CD8-positive, alpha-beta memory T cell (primary cell): ENCODE measurements at regions of chr15 and their contacts with region 1.

Region 1: GRCh38 chr15:64893481-64894394 is 18.0 kb upstream of the ANKDD1A start:
- DNase-seq: peak; percentile 84 to 98 (median 92)
- H3K4me3 ChIP-seq: peak overlapping the region; percentile 75
- H3K4me3 Mint-ChIP-seq: peak overlapping the region; percentile 78 to 94 (median 87)
- H3K27ac ChIP-seq: peak overlapping the region; percentile 86
- H3K27ac Mint-ChIP-seq: peak overlapping the region; percentile 95 to 99 (median 98)
- H3K4me1 ChIP-seq: peaks cover 62% of the 10 kb centered on the region
- H3K4me1 Mint-ChIP-seq: peaks cover 66 to 76% (median 71%) of the 10 kb centered on the region in 3 donors
- H3K27me3 ChIP-seq: no peaks in the 10 kb centered on the region
- H3K27me3 Mint-ChIP-seq: no peaks in the 10 kb centered on the region

Region 2: DNA sequence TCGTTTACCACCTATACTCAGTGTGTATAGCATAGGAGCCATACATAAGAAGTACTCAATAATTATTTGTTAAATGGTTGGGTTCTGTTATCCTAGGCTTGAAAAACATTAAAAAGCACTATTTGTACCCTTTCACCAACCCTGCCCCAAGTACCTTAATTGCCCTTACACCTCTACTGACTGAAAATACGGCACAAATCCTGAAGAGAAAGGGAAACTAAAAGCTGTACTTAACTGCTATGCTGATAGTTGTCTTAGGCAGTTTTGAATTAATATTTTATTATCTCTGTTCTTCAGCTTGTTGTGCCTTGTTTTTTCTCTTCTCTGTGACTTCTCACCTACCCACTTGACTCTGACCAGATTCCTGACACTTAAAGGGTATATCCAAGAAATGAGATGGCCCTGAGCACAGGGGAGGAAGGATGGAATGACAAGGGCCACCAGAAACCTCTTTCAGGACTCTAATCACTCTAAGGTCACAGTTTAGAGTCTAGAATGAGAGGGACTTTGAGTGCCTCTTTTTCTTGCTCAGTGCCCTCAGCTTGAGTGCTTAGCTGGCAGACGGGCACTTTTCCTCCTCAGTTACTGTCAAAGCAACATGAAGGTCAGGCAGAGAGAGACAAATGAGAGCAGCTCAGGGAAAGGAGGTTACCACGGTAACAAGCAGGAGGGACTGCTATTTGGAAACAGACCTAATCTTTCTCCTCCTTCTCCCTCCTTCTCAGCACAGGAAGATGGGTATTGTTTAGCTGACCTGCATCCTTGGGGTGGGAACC is 296.8 kb before region 1 on chr15:
- CTCF ChIA-PET with region 1: no interaction called
- POLR2A ChIA-PET with region 1: no interaction called
- DNase-seq: peak in 3 of 5 donors; percentile 24 to 63 (median 53)
- H3K4me3 ChIP-seq: peak overlapping the region; percentile 21
- H3K4me3 Mint-ChIP-seq: peak overlapping the region; percentile 43 to 90 (median 82)
- H3K27ac ChIP-seq: peak overlapping the region; percentile 49
- H3K27ac Mint-ChIP-seq: peak overlapping the region; percentile 82 to 97 (median 93)
- H3K4me1 ChIP-seq: peaks cover 52% of the 10 kb centered on the region
- H3K4me1 Mint-ChIP-seq: peaks cover 48 to 80% (median 59%) of the 10 kb centered on the region in 3 donors
- H3K27me3 ChIP-seq: no peaks in the 10 kb centered on the region
- H3K27me3 Mint-ChIP-seq: no peaks in the 10 kb centered on the region

Region 3: DNA sequence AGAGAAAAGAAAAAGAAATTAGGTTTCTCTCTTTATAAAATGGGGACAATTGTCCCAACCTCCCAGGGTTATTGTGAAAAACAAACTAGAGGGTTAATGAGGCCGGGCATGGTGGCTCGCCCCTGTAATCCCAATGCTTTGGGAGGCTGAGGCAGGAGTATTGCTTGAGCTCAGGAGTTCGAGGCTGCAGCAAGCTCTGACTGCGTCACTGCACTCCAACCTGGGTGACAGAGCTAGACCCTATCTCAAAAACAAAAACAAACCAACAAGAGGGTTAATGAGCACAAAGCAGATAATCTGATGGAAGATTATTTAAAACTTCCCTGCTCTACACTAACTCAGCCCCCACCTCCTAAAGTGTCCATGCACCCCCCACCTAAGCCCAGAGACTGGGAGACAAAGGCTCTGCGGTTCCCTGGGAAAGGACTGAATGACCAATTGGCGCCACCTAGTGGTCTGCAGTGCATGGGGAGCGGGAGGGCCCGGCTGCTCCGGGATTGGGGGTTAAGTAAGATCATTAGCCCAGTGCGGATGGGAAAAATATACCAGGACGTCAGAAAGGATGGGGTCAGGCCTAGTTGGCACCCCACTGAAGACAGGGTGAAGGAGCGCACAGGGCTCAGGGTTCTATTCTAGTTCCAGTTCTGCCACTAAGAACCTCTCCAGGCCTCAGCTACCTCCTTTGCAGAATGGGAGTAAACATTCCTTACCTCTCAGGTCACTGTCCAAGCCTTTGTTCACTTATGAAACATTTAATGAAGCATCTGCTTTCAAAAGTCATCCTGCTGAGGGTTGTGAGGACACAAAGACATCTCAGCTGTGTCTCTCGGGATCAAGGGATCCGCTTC is 83.9 kb before region 1 on chr15:
- CTCF ChIA-PET with region 1: interaction called, 15 read pairs
- POLR2A ChIA-PET with region 1: interaction called, 3 read pairs
- DNase-seq: peak; percentile 42 to 76 (median 56)
- H3K4me3 ChIP-seq: no peak overlapping the region
- H3K4me3 Mint-ChIP-seq: no peak overlapping the region
- H3K27ac ChIP-seq: no peak overlapping the region
- H3K27ac Mint-ChIP-seq: no peak overlapping the region
- H3K4me1 ChIP-seq: no peaks in the 10 kb centered on the region
- H3K4me1 Mint-ChIP-seq: peaks cover 3 to 6% (median 5%) of the 10 kb centered on the region in 3 donors
- H3K27me3 ChIP-seq: no peaks in the 10 kb centered on the region
- H3K27me3 Mint-ChIP-seq: peaks cover 3 to 6% of the 10 kb centered on the region in 2 donors

Region 4: DNA sequence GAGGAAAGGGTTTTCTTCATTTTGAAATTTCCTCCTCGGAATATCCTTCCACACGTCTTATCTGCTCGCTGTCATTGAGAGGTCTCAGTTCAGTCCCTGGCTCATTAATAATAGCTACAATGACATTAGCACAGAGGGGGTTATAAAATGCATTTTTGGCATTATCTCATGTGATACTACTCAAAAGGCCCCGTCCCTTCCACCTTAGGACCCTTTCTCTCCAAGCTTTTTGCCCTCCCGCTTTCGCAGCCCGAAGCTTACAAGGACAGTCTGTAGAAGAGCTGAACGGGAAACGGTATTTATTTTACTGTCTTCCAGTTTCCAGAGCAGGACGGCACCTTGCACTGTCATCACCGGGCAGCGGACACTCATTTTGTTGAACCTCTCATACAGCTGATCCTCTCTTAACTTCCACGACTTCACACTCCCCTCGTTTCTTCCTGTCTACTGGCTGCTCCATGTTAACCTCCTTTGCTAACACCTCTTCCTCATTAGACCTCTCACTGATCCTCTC is 57.7 kb before region 1 on chr15:
- CTCF ChIA-PET with region 1: interaction called, 62 read pairs
- POLR2A ChIA-PET with region 1: interaction called, 30 read pairs
- DNase-seq: no peak
- H3K4me3 ChIP-seq: no peak overlapping the region
- H3K4me3 Mint-ChIP-seq: peak overlapping the region; percentile 11 to 70 (median 52)
- H3K27ac ChIP-seq: no peak overlapping the region
- H3K27ac Mint-ChIP-seq: peak overlapping the region; percentile 1 to 88 (median 78)
- H3K4me1 ChIP-seq: peaks cover 53% of the 10 kb centered on the region
- H3K4me1 Mint-ChIP-seq: peaks cover 45 to 54% (median 51%) of the 10 kb centered on the region in 3 donors
- H3K27me3 ChIP-seq: no peaks in the 10 kb centered on the region
- H3K27me3 Mint-ChIP-seq: peaks cover 0 to 1% of the 10 kb centered on the region in 2 donors

Region 5: DNA sequence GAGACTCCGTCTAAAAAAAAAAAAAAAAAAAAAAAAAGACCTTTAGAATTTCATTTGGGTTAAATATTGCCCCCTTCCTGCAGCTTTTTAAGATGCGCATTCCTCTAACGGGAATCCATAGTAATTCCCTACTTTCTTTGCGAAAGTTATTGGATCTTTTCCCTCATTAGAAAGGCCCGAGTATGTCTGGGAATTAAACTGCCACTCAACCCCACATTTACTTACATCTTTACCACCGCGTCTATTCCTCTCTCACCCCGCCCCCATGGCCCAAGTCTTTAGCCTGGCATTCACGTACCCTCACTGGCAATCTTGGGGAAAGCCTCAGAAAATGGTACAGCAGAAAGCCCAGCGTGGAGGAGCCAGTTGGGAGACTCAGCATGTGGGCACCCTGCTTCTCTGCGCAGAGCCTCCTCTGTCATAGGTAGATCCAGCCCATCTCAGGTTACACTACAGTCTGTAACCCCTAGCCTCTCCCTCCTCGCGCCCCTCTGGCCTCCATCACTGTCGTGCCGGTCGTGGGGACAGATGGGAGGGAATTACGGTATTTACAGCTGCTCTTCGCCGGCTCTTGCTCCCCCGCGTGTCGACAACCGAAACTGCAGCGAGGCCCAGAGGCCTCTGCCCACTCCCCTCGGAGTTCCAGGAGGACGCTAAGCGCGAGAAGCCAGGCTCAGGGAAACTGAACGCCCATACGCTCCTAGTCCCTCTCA is 11.5 kb after region 1 on chr15:
- CTCF ChIA-PET with region 1: interaction called, 24 read pairs
- POLR2A ChIA-PET with region 1: interaction called, 9 read pairs
- DNase-seq: peak; percentile 64 to 84 (median 70)
- H3K4me3 ChIP-seq: peak overlapping the region; percentile 50
- H3K4me3 Mint-ChIP-seq: peak overlapping the region in 6 of 7 donors; percentile 28 to 71 (median 57)
- H3K27ac ChIP-seq: no peak overlapping the region
- H3K27ac Mint-ChIP-seq: peak overlapping the region in 5 of 8 donors; percentile 20 to 66 (median 57)
- H3K4me1 ChIP-seq: peaks cover 29% of the 10 kb centered on the region
- H3K4me1 Mint-ChIP-seq: peaks cover 35 to 46% (median 44%) of the 10 kb centered on the region in 3 donors
- H3K27me3 ChIP-seq: no peaks in the 10 kb centered on the region
- H3K27me3 Mint-ChIP-seq: peaks cover 0 to 2% of the 10 kb centered on the region in 2 donors